Activated naive CD4-positive, alpha-beta T cell treated with anti-CD3 and anti-CD28 coated beads, Interleukin-2, amount 10 ng/mL, durations not matched to agents 7 days and 5 days (primary cell): ENCODE measurements at regions of chr20 and their contacts with region 1.

Region 1: GRCh38 chr20:31566658-31567379 is 38.3 kb upstream of the ID1 start:
- DNase-seq: no peak
- H3K4me3 Mint-ChIP-seq: no peak overlapping the region
- H3K27ac Mint-ChIP-seq: peak overlapping the region; percentile 13
- H3K4me1 Mint-ChIP-seq: peaks cover 18% of the 10 kb centered on the region
- H3K27me3 Mint-ChIP-seq: no peaks in the 10 kb centered on the region

Region 2: DNA sequence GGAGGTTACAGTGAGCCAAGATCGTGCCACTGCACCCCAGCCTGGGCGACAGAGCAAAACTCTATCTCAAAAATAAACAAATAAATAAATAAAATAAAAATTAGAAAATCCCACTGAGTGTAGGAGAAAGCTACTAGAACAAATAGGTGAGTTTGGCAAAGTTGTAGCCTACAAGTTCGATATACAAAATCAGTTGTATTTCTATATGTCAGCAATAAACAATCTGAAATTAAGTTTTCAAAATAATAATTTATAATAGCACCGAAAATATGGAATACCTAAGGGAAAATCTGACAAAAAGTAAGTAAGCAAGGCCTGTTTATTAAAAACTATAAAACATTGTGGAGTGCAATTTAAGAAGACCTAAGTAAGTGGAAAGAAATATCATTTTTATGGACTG is 203.5 kb before region 1 on chr20:
- CTCF ChIA-PET with region 1: no interaction called
- DNase-seq: no peak
- H3K4me3 Mint-ChIP-seq: no peak overlapping the region
- H3K27ac Mint-ChIP-seq: no peak overlapping the region
- H3K4me1 Mint-ChIP-seq: no peaks in the 10 kb centered on the region
- H3K27me3 Mint-ChIP-seq: no peaks in the 10 kb centered on the region

Region 3: DNA sequence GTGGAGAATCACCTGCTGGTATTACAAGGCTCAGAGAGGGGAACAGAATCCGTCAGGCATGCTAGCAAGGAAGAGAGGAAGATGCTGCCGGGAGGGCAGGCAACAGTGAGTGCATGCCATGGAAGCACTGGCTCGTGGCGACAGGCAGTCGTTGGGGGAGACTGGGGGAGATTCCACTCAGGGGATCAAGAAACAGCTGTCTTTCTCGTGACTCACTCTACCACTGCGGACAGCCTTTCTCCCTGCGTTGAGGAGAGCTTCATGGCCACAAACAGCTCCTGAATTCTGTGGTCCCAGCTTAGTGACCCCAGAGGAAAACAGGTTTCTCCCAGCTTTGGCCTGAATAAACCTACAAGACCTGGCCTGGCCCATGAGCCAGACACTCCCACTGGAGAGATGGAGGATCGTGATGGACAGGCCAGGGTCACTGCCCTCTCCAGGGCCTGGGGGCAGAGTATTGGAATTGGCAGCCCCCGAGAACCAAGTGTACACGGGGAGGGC is 15.2 kb before region 1 on chr20:
- CTCF ChIA-PET with region 1: interaction called, 22 read pairs
- DNase-seq: no peak
- H3K4me3 Mint-ChIP-seq: no peak overlapping the region
- H3K27ac Mint-ChIP-seq: no peak overlapping the region
- H3K4me1 Mint-ChIP-seq: peaks cover 16% of the 10 kb centered on the region
- H3K27me3 Mint-ChIP-seq: no peaks in the 10 kb centered on the region